ENCODE measurements at regions of chr1 and their contacts with region 1.

Region 1: DNA sequence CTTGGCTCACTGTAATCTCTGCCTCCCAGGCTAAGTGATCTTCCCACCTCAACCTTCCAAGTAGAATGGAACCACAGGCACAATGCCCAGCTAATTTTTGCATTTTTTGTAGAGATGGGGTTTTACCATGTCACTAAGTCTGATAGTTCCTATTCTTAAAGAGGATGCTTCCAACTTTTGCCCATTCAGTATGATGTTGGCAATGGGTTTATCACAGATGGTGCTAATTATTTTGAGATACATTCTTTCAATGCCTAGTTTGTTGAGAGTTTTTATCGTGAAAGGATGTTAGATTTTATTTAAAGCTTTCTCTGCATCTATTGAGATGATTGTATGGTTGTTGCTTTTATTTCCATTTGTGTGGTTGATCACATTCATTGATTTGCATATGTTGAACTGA is 103.9 kb downstream of the SLC44A5 start:
- DNase-seq: no peak
- H3K4me3 ChIP-seq: no peak overlapping the region
- H3K27ac ChIP-seq: no peak overlapping the region
- H3K4me1 ChIP-seq: no peaks in the 10 kb centered on the region
- H3K27me3 ChIP-seq: no peaks in the 10 kb centered on the region
- CTCF ChIP-seq: no peak
- EP300 ChIP-seq: no peak
- POLR2A ChIP-seq: no peak

Region 2: DNA sequence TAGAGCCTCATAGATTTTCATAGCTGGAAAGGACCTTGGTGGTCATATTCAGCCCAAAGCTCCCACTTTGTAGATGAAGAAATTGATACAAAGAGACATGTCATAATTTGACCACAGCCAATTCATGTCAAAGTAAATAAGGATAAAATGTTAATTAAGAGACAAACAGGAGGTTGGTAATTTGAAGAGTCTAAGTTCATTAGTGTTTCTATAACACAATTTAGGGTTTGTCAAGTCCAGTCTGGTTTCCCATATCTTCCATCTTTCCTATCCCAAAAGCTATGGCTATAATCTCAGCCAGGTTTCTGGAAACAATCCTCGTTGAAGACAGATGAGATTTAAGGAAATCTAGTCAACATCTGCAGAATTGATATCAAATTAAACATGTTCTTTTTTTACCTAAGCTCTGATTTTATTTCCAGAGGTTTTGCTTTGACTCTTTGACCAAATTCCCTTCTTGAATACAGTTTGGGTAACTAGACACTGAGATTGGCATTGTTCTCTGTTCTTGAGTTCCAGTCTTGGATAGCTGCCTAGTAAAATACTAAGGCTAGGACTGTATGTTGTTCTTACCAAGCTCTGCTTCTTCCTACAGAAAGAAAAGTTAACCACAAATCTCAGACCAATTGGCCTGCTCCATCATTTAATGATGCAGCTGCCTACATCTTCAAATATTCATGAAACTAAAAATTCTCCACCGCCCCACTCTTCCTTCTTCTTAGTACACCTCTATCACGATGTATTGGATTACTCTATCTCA is 41.9 kb after region 1 on chr1:
- in situ Hi-C with region 1: no loop called
- intact Hi-C with region 1: loop called (anchors 1 kb)
- DNase-seq: no peak
- H3K4me3 ChIP-seq: no peak overlapping the region
- H3K27ac ChIP-seq: no peak overlapping the region
- H3K4me1 ChIP-seq: no peaks in the 10 kb centered on the region
- H3K27me3 ChIP-seq: no peaks in the 10 kb centered on the region
- CTCF ChIP-seq: no peak
- EP300 ChIP-seq: no peak
- POLR2A ChIP-seq: no peak

Region 3: GRCh38 chr1:76279101-76279748 is 772.2 kb after region 1 on chr1:
- in situ Hi-C with region 1: no loop called
- intact Hi-C with region 1: no loop called
- DNase-seq: no peak
- H3K4me3 ChIP-seq: no peak overlapping the region
- H3K27ac ChIP-seq: no peak overlapping the region
- H3K4me1 ChIP-seq: no peaks in the 10 kb centered on the region
- H3K27me3 ChIP-seq: no peaks in the 10 kb centered on the region
- CTCF ChIP-seq: no peak
- EP300 ChIP-seq: no peak
- POLR2A ChIP-seq: no peak

Region 4: DNA sequence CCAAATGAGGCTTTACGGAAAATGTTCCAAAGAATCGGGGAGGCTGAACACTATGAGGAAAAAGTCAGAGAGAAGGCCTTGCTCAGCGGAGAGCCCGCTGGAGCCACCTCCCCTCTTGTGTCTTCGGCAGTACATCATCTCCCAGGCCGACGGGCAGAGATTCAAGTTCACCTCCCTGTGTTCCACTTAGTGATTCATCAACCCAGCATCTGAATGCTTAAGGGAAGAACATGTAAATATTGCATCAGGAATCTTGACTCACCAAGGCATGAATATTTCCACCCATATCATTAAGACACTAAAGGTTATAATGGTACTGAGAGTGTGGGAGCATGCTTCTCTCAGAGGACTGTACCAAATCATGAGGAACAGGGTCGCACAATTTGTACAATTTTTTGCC is 1532.8 kb after region 1 on chr1:
- in situ Hi-C with region 1: no loop called
- intact Hi-C with region 1: no loop called
- DNase-seq: no peak
- H3K4me3 ChIP-seq: no peak overlapping the region
- H3K27ac ChIP-seq: peak overlapping the region in 1 of 4 donors; percentile 7
- H3K4me1 ChIP-seq: no peaks in the 10 kb centered on the region
- H3K27me3 ChIP-seq: no peaks in the 10 kb centered on the region
- CTCF ChIP-seq: no peak
- EP300 ChIP-seq: no peak
- POLR2A ChIP-seq: no peak

Measured in transverse colon (tissue), 4 donors.